PC-3 (cell line): ENCODE measurements at regions of chr9 and their contacts with region 1.

Region 1: GRCh38 chr9:27482709-27483108 is 41.4 kb upstream of the IFNK start:
- DNase-seq: no peak
- ATAC-seq: no peak
- H3K4me3 ChIP-seq: no peak overlapping the region
- H3K27ac ChIP-seq: no peak overlapping the region
- H3K4me1 ChIP-seq: no peaks in the 10 kb centered on the region
- H3K27me3 ChIP-seq: no peaks in the 10 kb centered on the region
- CTCF ChIP-seq: no peak

Region 2: DNA sequence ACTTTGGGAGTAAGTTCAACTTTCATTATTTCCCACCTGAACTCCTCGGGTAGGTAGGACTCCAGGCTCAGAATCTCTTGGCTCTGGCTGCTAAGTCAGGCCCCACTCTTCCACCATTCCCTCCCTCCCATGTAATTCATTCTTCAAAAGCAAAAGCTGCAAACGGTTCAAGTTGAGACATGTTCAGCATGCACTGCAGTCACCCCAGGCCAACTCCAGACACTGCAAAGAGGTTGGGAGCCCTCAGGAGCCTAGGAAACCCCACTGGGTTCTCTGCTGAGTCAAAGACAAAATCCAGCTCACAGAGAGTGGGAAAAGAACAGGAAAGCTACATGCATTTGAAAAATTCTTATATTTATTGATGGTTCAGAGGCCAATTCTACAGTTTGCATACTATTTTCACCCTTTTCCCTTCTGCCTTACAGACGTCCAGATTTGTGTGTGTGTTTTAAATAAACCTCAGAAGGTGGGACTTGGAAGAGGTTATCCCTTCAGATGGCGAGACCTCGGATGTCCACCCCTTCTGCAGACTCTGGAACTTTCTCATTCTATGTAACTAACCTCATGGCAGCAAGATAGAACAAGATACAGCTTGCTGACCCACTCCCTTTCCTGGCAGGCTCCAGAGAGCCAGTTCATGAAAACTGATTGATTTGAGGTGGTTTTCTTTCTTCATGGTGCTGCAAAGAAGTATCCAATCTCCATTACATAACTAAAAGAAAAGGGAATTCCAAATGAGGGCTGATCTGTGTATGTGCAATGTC is 120.1 kb before region 1 on chr9:
- CTCF ChIA-PET with region 1: no interaction called
- POLR2A ChIA-PET with region 1: interaction called, 10 read pairs
- intact Hi-C with region 1: no loop called
- DNase-seq: no peak
- ATAC-seq: no peak
- H3K4me3 ChIP-seq: no peak overlapping the region
- H3K27ac ChIP-seq: no peak overlapping the region
- H3K4me1 ChIP-seq: no peaks in the 10 kb centered on the region
- H3K27me3 ChIP-seq: no peaks in the 10 kb centered on the region
- CTCF ChIP-seq: no peak

Region 3: GRCh38 chr9:27414220-27414761 is 68.4 kb before region 1 on chr9:
- CTCF ChIA-PET with region 1: no interaction called
- POLR2A ChIA-PET with region 1: no interaction called
- intact Hi-C with region 1: no loop called
- DNase-seq: no peak
- ATAC-seq: no peak
- H3K4me3 ChIP-seq: no peak overlapping the region
- H3K27ac ChIP-seq: no peak overlapping the region
- H3K4me1 ChIP-seq: no peaks in the 10 kb centered on the region
- H3K27me3 ChIP-seq: no peaks in the 10 kb centered on the region
- CTCF ChIP-seq: no peak